Naive thymus-derived CD4-positive, alpha-beta T cell (primary cell): ENCODE measurements at regions of chr3 and their contacts with region 1.

Region 1: GRCh38 chr3:120596116-120596852 is at the start of gene NDUFB4:
- DNase-seq: peak; percentile 84 to 97 (median 93)
- ATAC-seq: peak; percentile 97
- H3K4me3 ChIP-seq: peak within 1 kb of the TSS; percentile 99
- H3K4me3 Mint-ChIP-seq: peak within 1 kb of the TSS in 8 of 10 donors; percentile 85 to 99 (median 96)
- H3K27ac ChIP-seq: peak within 1 kb of the TSS; percentile 92
- H3K27ac Mint-ChIP-seq: peak within 1 kb of the TSS in 5 of 9 donors; percentile 94 to 99 (median 98)
- H3K4me1 ChIP-seq: peaks cover 25 to 27% of the 10 kb centered on the region in 2 donors
- H3K4me1 Mint-ChIP-seq: peaks cover 0 to 20% (median 11%) of the 10 kb centered on the region in 7 donors
- H3K27me3 ChIP-seq: no peaks in the 10 kb centered on the region
- H3K27me3 Mint-ChIP-seq: peaks cover 0 to 20% (median 0%) of the 10 kb centered on the region in 5 donors
- total RNA-seq, gene NDUFB4: 63.4 to 126 (median 76.2) TPM

Region 2: GRCh38 chr3:120558771-120559241 is 37.5 kb before region 1 on chr3:
- CTCF ChIA-PET with region 1: interaction called, 7 read pairs
- POLR2A ChIA-PET with region 1: interaction called, 3 read pairs
- intact Hi-C with region 1: loop called (anchors 1 kb)
- DNase-seq: peak; percentile 80 to 89 (median 88)
- ATAC-seq: peak; percentile 97
- H3K4me3 ChIP-seq: peak overlapping the region; percentile 61
- H3K4me3 Mint-ChIP-seq: peak overlapping the region; percentile 75 to 87 (median 82)
- H3K27ac ChIP-seq: peak overlapping the region; percentile 58
- H3K27ac Mint-ChIP-seq: peak overlapping the region; percentile 54 to 91 (median 83)
- H3K4me1 ChIP-seq: peaks cover 6% of the 10 kb centered on the region in 2 donors
- H3K4me1 Mint-ChIP-seq: peaks cover 6 to 23% (median 16%) of the 10 kb centered on the region in 7 donors
- H3K27me3 ChIP-seq: peaks cover 0 to 4% of the 10 kb centered on the region in 2 donors
- H3K27me3 Mint-ChIP-seq: peaks cover 0 to 13% (median 7%) of the 10 kb centered on the region in 5 donors

Region 3: GRCh38 chr3:120567370-120568201 is 28.7 kb before region 1 on chr3:
- CTCF ChIA-PET with region 1: interaction called, 10 read pairs
- POLR2A ChIA-PET with region 1: interaction called, 4 read pairs
- intact Hi-C with region 1: no loop called
- DNase-seq: peak in 1 of 9 donors; percentile 28
- ATAC-seq: peak; percentile 65
- H3K4me3 ChIP-seq: no peak overlapping the region
- H3K4me3 Mint-ChIP-seq: peak overlapping the region in 9 of 10 donors; percentile 26 to 77 (median 70)
- H3K27ac ChIP-seq: no peak overlapping the region
- H3K27ac Mint-ChIP-seq: peak overlapping the region in 5 of 9 donors; percentile 7 to 58 (median 23)
- H3K4me1 ChIP-seq: no peaks in the 10 kb centered on the region
- H3K4me1 Mint-ChIP-seq: peaks cover 0 to 6% (median 0%) of the 10 kb centered on the region in 7 donors
- H3K27me3 ChIP-seq: peaks cover 0 to 3% of the 10 kb centered on the region in 2 donors
- H3K27me3 Mint-ChIP-seq: peaks cover 0 to 9% (median 4%) of the 10 kb centered on the region in 5 donors

Region 4: DNA sequence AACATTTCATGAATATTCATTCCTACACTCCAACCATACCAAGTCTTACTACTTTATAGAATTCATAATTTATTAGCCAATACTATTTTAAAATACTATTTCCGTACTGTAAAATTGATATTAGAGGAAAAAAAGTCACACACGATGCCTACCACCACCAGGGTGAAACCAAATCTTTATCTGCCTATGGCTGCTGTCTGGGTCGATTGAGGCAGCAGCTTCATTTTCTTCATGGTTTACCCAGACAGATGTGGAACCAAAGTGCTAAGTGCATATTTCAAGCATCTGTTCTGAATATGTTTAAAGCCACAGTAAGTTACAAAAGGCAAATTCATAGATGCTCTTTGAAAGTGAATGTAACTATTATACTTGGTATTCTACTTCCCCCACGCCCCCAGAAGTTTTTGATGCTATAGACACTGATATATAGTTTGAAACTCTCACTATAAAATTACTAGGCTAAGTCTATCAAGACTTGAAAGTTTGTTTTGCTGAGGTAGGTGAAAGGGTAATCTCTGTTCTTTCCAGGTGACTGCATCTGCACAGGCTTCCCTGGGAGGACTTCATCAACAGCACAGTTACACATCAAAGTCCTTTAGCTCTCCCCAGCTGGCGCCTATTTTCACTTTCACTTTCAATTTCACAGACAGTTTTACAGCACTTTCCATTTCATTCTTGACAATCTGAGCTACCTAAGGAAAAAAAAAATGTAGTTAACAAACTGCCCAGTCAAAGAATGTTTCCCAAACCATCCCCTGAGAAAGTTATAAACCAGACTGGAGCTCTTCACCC is 835.6 kb after region 1 on chr3:
- CTCF ChIA-PET with region 1: no interaction called
- POLR2A ChIA-PET with region 1: no interaction called
- intact Hi-C with region 1: loop called in 1 of 2 experiments (anchors 5 kb)
- DNase-seq: peak in 8 of 9 donors; percentile 36 to 80 (median 74)
- ATAC-seq: peak; percentile 89
- H3K4me3 ChIP-seq: peak overlapping the region; percentile 52
- H3K4me3 Mint-ChIP-seq: peak overlapping the region; percentile 46 to 84 (median 76)
- H3K27ac ChIP-seq: peak overlapping the region; percentile 33
- H3K27ac Mint-ChIP-seq: peak overlapping the region; percentile 48 to 92 (median 84)
- H3K4me1 ChIP-seq: peaks cover 0 to 9% of the 10 kb centered on the region in 2 donors
- H3K4me1 Mint-ChIP-seq: peaks cover 6 to 31% (median 24%) of the 10 kb centered on the region in 7 donors
- H3K27me3 ChIP-seq: no peaks in the 10 kb centered on the region
- H3K27me3 Mint-ChIP-seq: no peaks in the 10 kb centered on the region

Region 5: GRCh38 chr3:121660356-121661171 is 1064.3 kb after region 1 on chr3 and contains the start of gene HCLS1:
- CTCF ChIA-PET with region 1: no interaction called
- POLR2A ChIA-PET with region 1: no interaction called
- intact Hi-C with region 1: loop called in 1 of 2 experiments (anchors 10 kb)
- DNase-seq: peak; percentile 60 to 87 (median 79)
- ATAC-seq: peak; percentile 87
- H3K4me3 ChIP-seq: peak within 1 kb of the TSS; percentile 90
- H3K4me3 Mint-ChIP-seq: peak within 1 kb of the TSS; percentile 82 to 99 (median 95)
- H3K27ac ChIP-seq: peak within 1 kb of the TSS; percentile 90
- H3K27ac Mint-ChIP-seq: peak within 1 kb of the TSS; percentile 96 to 100 (median 99)
- H3K4me1 ChIP-seq: peaks cover 34 to 41% of the 10 kb centered on the region in 2 donors
- H3K4me1 Mint-ChIP-seq: peaks cover 41 to 68% (median 57%) of the 10 kb centered on the region in 7 donors
- H3K27me3 ChIP-seq: no peaks in the 10 kb centered on the region
- H3K27me3 Mint-ChIP-seq: no peaks in the 10 kb centered on the region
- total RNA-seq, gene HCLS1: 275 to 357 (median 311) TPM